Keratinocyte (primary cell): ENCODE measurements at regions of chr7 and their contacts with region 1.

Region 1: DNA sequence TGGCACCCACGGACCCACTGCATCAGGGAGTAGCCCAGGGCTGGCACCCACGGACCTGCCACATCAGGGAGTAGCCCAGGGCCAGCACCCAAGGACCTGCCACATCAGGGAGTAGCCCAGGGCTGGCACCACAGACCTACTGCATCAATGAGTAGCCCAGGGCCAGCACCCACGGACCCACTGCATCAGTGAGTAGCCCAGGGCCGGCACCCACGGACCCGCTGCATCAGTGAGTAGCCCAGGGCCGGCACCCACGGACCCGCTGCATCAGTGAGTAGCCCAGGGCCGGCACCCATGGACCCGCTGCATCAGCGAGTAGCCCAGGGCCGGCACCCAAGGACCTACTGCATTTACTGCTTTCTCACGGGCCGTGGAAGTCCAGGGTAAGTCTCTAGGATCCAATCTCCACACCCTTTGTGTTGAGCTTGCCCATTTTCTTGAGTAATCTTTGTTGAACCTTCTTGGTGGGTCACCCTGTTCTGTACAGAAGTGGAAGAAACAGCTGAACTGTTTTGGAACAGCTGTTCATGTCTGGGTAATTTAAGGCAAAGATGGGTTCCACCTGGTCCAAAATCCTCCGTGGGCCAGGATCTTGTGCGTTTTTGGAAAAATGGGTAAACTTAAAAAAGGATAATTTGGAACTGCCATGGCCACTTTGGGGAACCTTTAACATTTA is 69.0 kb downstream of the VIPR2 start:
- DNase-seq: no peak
- H3K4me3 ChIP-seq: no peak overlapping the region
- H3K27ac ChIP-seq: no peak overlapping the region
- H3K4me1 ChIP-seq: no peaks in the 10 kb centered on the region
- H3K27me3 ChIP-seq: no peaks in the 10 kb centered on the region
- CTCF ChIP-seq: no peak

Region 2: GRCh38 chr7:159137906-159138305 is 62.2 kb after region 1 on chr7:
- dilution Hi-C with region 1: loop called (anchors 5 kb)
- DNase-seq: no peak
- H3K4me3 ChIP-seq: no peak overlapping the region
- H3K27ac ChIP-seq: no peak overlapping the region
- H3K4me1 ChIP-seq: no peaks in the 10 kb centered on the region
- H3K27me3 ChIP-seq: peaks cover 7% of the 10 kb centered on the region
- CTCF ChIP-seq: no peak